Posterior cingulate gyrus (tissue), 11 donors: ENCODE measurements at regions of chr22 and their contacts with region 1.

Region 1: DNA sequence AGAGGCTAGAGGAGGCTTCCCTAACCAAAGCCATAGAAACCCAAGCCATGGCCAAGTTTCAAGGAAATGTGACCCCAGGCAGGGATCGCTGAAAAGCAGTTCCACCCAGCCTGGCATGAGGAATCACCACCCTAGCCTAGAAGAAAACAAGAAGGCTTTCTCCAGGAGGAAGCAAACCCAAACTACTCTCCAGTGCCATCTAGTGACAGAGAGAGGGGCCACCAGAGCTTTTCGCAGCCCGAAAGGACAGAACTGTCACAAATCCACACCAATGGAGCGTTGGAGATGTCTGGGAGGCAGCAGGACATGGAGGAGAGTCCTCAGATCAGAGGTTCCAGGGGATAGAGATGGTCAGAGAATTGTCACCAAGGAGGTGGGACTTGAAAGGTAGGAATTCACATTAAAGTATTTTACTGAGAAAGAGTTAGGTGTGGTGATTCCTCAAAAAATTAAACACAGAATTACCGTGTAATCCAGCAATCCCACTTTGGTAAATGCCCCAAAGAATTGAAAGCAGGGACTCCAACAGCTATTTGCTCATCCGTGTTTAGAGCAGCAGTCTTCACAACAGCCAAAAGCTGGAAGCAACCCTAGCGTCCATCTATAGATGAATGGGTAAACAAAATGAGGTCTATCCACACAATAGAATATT is 67.3 kb upstream of the NUP50 start:
- DNase-seq: peak in 9 of 10 donors; percentile 32 to 95 (median 60)

Region 2: GRCh38 chr22:44819971-44820631 is 276.3 kb before region 1 on chr22:
- intact Hi-C with region 1: loop called (anchors 2 kb)
- DNase-seq: peak in 3 of 10 donors; percentile 47 to 84 (median 79)

Region 3: GRCh38 chr22:45483918-45484499 is 387.6 kb after region 1 on chr22:
- intact Hi-C with region 1: no loop called
- DNase-seq: peak in 1 of 10 donors; percentile 46